ENCODE measurements at regions of chr17 and their contacts with region 1.

Region 1: DNA sequence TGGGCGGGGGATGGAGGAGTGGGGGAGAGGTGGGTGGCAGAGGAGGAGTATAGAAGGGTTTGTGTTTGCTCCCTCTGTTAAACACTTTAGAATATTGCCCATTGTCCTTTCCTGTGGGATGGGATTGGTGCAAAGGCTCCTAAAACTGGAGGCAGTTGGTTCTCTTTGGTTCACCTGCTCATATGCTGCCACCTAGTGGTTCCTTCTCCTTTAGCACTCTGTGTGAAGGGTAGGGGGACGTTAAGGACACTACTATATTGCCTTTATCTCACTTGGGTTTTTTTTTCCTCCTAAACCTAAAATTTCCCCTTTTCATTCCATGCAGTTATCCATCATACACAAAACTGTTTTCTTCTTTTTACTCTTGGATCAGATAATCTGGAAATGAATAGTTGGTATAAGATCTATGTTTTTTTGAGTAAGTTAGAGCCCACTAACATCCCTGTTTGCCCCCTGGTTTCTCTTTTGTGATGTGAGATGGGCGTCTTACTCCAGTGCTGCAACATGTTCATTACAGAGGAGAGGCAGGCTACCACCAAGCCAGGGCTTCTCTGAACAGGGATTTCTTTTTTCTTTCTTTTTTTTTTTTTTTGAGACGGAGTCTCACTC is 23.8 kb downstream of the SNX11 start:
- DNase-seq: no peak
- ATAC-seq: peak; percentile 83
- H3K4me3 Mint-ChIP-seq: no peak overlapping the region
- H3K27ac Mint-ChIP-seq: no peak overlapping the region
- H3K4me1 Mint-ChIP-seq: peaks cover 4% of the 10 kb centered on the region
- H3K27me3 Mint-ChIP-seq: no peaks in the 10 kb centered on the region
- CTCF ChIP-seq: no peak

Region 2: DNA sequence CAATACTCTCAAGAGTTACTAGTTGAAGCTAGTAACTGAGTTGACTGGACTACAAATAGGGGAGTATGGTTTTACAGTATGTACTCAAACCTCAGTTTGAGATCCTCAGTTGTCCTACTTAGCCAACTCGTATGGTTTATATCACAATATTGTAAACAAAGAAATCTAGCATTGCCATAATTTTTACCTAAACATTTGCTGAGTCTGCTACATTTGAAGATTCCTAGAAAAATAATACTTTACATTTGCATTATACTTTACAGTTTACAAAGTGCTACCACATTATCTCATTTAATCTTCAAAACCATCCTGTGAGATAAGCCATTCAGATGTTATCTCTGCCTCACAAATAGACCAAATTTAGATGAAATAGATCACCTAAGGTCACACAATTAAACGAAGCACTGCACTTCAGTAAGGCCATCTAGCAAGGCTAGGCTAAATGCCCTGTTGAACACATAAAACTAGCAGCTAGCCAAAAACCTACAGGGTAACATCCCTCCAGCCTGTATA is 46.3 kb before region 1 on chr17:
- CTCF ChIA-PET with region 1: interaction called, 169 read pairs
- POLR2A ChIA-PET with region 1: interaction called, 3 read pairs
- intact Hi-C with region 1: loop called (anchors 1 kb)
- DNase-seq: no peak
- ATAC-seq: no peak
- H3K4me3 Mint-ChIP-seq: no peak overlapping the region
- H3K27ac Mint-ChIP-seq: no peak overlapping the region
- H3K4me1 Mint-ChIP-seq: peaks cover 5% of the 10 kb centered on the region
- H3K27me3 Mint-ChIP-seq: no peaks in the 10 kb centered on the region
- CTCF ChIP-seq: no peak

Region 3: DNA sequence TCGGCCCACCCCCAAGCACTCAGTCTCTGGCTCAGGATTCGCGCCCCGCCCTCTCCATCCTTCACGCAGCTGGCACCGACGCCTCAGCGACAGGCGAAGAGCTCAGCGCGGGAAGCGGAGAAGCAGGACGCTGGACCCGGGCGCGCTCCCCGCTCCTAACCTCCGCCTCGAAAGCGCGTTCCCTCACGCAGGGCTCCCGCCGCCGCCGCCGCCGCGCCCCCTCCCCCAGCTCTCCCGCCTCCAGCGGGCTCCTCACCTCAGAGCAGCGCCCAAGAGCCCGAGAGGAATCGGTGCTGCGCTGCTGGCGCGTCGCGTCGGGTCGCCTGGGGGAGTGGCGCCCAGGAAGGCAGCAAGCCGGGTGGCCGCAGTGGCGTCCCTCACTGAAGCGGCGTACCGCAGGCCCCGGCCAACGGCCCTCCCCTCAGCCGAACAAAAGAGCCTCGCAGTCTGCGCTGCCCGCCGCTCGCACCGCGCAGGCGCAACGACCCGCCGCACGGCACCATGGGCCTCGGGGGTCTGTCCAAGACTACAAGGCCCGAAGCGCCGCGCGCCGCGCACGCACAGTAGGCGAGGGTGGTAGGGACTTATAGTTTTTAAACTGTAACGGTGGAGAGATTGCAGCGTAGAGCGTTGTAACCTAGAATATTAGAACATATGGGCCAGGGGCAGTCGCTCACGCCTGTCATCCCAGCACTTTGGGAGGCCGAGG is 30.2 kb before region 1 on chr17 and contains the start of gene CBX1:
- CTCF ChIA-PET with region 1: interaction called, 8 read pairs
- POLR2A ChIA-PET with region 1: interaction called, 3 read pairs
- intact Hi-C with region 1: loop called (anchors 1 kb)
- DNase-seq: peak; percentile 92
- ATAC-seq: peak; percentile 92
- H3K4me3 Mint-ChIP-seq: peak within 1 kb of the TSS; percentile 94
- H3K27ac Mint-ChIP-seq: peak within 1 kb of the TSS; percentile 92
- H3K4me1 Mint-ChIP-seq: peaks cover 50% of the 10 kb centered on the region
- H3K27me3 Mint-ChIP-seq: no peaks in the 10 kb centered on the region
- CTCF ChIP-seq: no peak
- total RNA-seq, gene CBX1: 46.0 and 49.5 TPM in 2 replicates